ENCODE measurements at regions of chr22 and their contacts with region 1.

Region 1: DNA sequence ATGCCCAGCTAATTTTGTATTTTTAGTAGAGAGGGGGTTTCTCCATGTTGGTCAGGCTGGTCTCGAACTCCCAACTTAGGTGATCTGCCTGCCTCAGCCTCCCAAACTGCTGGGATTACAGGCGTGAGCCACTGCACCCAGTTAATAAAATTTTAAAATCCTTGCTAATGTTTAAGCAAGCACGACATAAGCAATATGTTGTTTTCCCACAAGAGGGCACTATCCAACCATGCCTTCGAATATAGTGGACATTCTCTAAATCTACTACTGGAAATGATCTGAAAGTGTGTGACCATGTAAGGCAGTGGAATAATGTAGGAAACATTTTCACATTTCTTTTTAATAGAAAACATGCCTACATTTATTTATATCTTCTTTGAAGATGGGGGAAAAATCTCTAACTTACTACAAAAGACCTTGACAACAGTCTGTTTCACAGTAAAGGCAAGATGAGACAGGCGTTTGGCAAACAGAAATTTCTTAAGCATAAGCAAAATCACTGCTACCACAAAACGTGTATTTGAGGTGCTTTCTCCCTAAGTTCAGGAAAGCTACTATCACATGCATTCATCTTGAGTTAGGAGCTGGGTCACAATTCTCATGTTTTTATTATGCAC is 38.2 kb downstream of the PITPNB start:
- DNase-seq: peak in 2 of 4 experiments; percentile 17 to 58
- ATAC-seq: peak; percentile 82
- H3K4me3 ChIP-seq: no peak overlapping the region
- H3K27ac ChIP-seq: no peak overlapping the region
- H3K4me1 ChIP-seq: no peaks in the 10 kb centered on the region
- H3K27me3 ChIP-seq: no peaks in the 10 kb centered on the region
- CTCF ChIP-seq: peak; percentile 40 to 72 (median 55); a peak in 4 of 6 replicates
- EP300 ChIP-seq: no peak
- POLR2A ChIP-seq: no peak
- RAD21 ChIP-seq: peak; percentile 65 to 74

Region 2: DNA sequence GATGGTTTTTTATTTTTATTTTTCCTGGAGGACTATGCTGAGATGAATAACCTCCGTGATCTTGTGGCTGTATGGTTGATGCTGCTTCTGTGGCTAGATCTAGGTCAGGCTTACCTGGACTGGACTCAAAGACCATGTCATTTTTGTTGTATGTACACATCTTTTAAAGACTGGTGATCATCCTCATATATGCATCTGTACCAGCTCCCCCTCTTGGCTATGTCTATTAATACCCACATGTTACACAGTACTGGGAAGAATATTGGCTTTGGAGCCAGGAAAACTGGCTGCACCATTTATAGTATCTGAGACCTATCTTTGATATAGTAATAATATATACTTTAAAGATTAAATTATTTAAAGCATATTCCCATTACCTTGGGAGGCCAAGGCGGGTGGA is 56.6 kb after region 1 on chr22:
- CTCF ChIA-PET with region 1: no interaction called
- POLR2A ChIA-PET with region 1: no interaction called
- in situ Hi-C with region 1: no loop called
- intact Hi-C with region 1: loop called (anchors 10 kb)
- DNase-seq: no peak
- ATAC-seq: no peak
- H3K4me3 ChIP-seq: no peak overlapping the region
- H3K27ac ChIP-seq: no peak overlapping the region
- H3K4me1 ChIP-seq: no peaks in the 10 kb centered on the region; a peak in 1 of 5 replicates
- H3K27me3 ChIP-seq: no peaks in the 10 kb centered on the region
- CTCF ChIP-seq: peak in 1 of 3 experiments; percentile 16; a peak in 1 of 6 replicates
- EP300 ChIP-seq: no peak
- POLR2A ChIP-seq: no peak
- RAD21 ChIP-seq: no peak

Region 3: GRCh38 chr22:28198692-28199091 is 317.8 kb after region 1 on chr22:
- CTCF ChIA-PET with region 1: no interaction called
- POLR2A ChIA-PET with region 1: no interaction called
- in situ Hi-C with region 1: no loop called
- intact Hi-C with region 1: no loop called
- DNase-seq: no peak
- ATAC-seq: no peak
- H3K4me3 ChIP-seq: no peak overlapping the region
- H3K27ac ChIP-seq: no peak overlapping the region
- H3K4me1 ChIP-seq: no peaks in the 10 kb centered on the region
- H3K27me3 ChIP-seq: no peaks in the 10 kb centered on the region
- CTCF ChIP-seq: no peak
- EP300 ChIP-seq: no peak
- POLR2A ChIP-seq: no peak
- RAD21 ChIP-seq: no peak

Region 4: GRCh38 chr22:28424427-28425080 is 543.7 kb after region 1 on chr22:
- CTCF ChIA-PET with region 1: no interaction called
- POLR2A ChIA-PET with region 1: no interaction called
- in situ Hi-C with region 1: no loop called
- intact Hi-C with region 1: no loop called
- DNase-seq: no peak
- ATAC-seq: no peak
- H3K4me3 ChIP-seq: no peak overlapping the region
- H3K27ac ChIP-seq: no peak overlapping the region
- H3K4me1 ChIP-seq: no peaks in the 10 kb centered on the region
- H3K27me3 ChIP-seq: no peaks in the 10 kb centered on the region
- CTCF ChIP-seq: no peak
- EP300 ChIP-seq: no peak
- POLR2A ChIP-seq: no peak
- RAD21 ChIP-seq: no peak